ENCODE measurements at regions of chr2 and their contacts with region 1.

Region 1: DNA sequence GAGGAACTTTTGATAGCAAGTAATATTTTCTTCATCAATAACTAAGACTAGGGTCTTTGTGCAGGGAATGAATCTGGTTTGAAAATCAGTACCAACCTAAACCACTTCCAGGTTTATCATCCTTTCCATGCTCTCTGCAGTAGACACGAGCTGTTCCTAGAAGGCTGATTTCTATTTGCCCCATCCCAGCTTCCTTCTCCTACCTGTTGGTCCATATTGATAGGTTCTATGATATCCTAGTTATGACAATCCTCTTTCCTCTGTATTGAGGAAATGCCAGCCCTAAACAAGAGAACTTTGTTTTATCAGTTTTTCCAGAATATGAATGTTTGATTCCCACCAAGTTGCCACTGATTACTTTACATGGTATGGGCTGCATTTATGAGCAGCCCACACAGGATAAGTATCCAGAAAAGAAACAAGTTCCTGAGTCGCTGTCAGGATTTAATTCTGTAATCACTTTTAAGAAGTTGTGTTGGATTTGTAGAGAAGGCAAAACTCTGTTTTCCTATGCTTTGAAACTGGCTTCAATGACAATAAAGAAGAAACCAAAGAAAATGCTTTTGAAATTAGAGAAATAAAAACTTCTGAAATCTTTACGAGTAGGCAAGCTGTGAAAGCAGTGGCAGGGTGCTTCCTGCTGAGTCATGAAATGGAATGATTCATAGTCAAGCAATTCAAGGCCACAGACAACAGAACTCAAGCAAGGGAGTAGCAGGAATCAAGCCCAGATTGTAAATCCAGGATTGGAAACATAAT is 37.3 kb upstream of the TANK start:
- DNase-seq: peak; percentile 81
- ATAC-seq: peak; percentile 86
- H3K4me3 ChIP-seq: peak overlapping the region; percentile 18 to 46
- H3K27ac ChIP-seq: peak overlapping the region; percentile 98
- H3K4me1 ChIP-seq: peaks cover 69 to 71% of the 10 kb centered on the region in 2 experiments
- H3K27me3 ChIP-seq: no peaks in the 10 kb centered on the region
- CTCF ChIP-seq: no peak
- POLR2A ChIP-seq: no peak
- RAD21 ChIP-seq: peak; percentile 12; the same call in 1 of the 2 replicates

Region 2: GRCh38 chr2:160210599-160211138 is 912.3 kb before region 1 on chr2:
- CTCF ChIA-PET with region 1: no interaction called
- POLR2A ChIA-PET with region 1: no interaction called
- RAD21 ChIA-PET with region 1: no interaction called
- intact Hi-C with region 1: loop called (anchors 5 kb)
- DNase-seq: peak; percentile 68
- ATAC-seq: peak; percentile 60
- H3K4me3 ChIP-seq: no peak overlapping the region
- H3K27ac ChIP-seq: no peak overlapping the region
- H3K4me1 ChIP-seq: peaks cover 46 to 68% of the 10 kb centered on the region in 2 experiments
- H3K27me3 ChIP-seq: no peaks in the 10 kb centered on the region
- CTCF ChIP-seq: peak; percentile 81 to 97 (median 94)
- POLR2A ChIP-seq: no peak
- RAD21 ChIP-seq: peak; percentile 84

Measured in HCT116 (cell line).